ENCODE measurements at regions of chr19 and their contacts with region 1.

Region 1: DNA sequence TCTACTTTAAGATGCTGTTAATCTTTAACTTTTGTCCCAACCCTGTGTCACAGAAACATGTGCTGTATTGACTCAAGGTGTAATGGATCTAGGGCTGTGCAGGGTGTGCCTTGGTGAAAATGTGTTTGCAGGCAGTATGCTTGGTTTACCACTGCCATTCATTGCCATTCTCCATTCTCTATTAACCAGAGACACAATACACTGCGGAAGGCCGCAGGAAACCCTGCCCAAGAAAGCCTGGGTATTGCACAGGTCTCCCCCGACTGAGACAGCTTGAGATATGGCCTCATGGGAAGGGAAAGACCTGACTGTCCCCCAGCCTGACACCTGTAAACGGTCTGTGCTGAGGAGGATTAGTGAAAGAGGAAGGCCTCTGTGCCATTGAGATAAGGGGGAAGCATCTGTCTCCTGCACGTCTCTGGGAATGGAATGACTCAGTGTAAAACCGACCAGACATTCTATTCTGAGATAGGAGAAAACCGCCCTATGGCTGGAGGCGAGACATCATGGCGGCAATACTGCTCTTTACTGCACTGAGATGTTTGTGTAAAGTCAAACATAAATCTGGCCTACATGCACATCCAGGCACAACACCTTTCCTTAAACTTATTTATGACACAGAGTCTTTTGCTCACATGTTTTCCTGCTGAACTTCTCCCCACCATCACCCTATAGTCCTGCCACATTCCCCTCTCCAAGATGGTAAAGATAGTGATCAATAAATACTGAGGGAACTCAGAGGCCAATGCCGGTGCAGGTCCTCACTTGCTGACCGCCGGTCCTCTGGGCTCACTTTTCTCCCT is 13.1 kb upstream of the ZNF888 start:
- DNase-seq: peak; percentile 45 to 97 (median 64)
- ATAC-seq: peak; percentile 84
- H3K4me3 ChIP-seq: no peak overlapping the region; the same call in 1 of the 2 replicates
- H3K27ac ChIP-seq: peak overlapping the region; percentile 79
- H3K4me1 ChIP-seq: peaks cover 40 to 43% of the 10 kb centered on the region in 2 experiments
- H3K27me3 ChIP-seq: no peaks in the 10 kb centered on the region
- CTCF ChIP-seq: no peak
- EP300 ChIP-seq: peak; percentile 98
- POLR2A ChIP-seq: no peak
- RAD21 ChIP-seq: peak in 1 of 2 experiments; percentile 10; a peak in 1 of 4 replicates

Region 2: GRCh38 chr19:52897144-52897935 is 39.0 kb before region 1 on chr19 and contains the start of gene ZNF320:
- CTCF ChIA-PET with region 1: interaction called, 4 read pairs
- POLR2A ChIA-PET with region 1: no interaction called
- in situ Hi-C with region 1: no loop called
- intact Hi-C with region 1: loop called (anchors 5 kb)
- DNase-seq: peak; percentile 97 to 98 (median 97)
- ATAC-seq: peak; percentile 99
- H3K4me3 ChIP-seq: peak within 1 kb of the TSS; percentile 63
- H3K27ac ChIP-seq: peak within 1 kb of the TSS; percentile 92
- H3K4me1 ChIP-seq: peaks cover 0 to 21% of the 10 kb centered on the region in 2 experiments; a peak in 4 of 5 replicates
- H3K27me3 ChIP-seq: no peaks in the 10 kb centered on the region
- CTCF ChIP-seq: no peak
- EP300 ChIP-seq: no peak; the same call in 1 of the 2 replicates
- POLR2A ChIP-seq: peak; percentile 97
- RAD21 ChIP-seq: 0 out of 4 replicates have a peak, but pooled peaks of 1 of the 2 experiments have one; percentile 6
- polyA plus RNA-seq, gene ZNF320: 5.4 to 6.5 TPM